CD8-positive, alpha-beta T cell (primary cell): ENCODE measurements at regions of chr15 and their contacts with region 1.

Region 1: GRCh38 chr15:98518823-98519561 is 129.3 kb upstream of the IGF1R start:
- DNase-seq: peak in 8 of 9 experiments; percentile 21 to 78 (median 45)
- ATAC-seq: peak; percentile 49
- H3K4me3 ChIP-seq: no peak overlapping the region
- H3K4me3 Mint-ChIP-seq: no peak overlapping the region
- H3K27ac ChIP-seq: no peak overlapping the region
- H3K27ac Mint-ChIP-seq: no peak overlapping the region
- H3K4me1 ChIP-seq: no peaks in the 10 kb centered on the region
- H3K4me1 Mint-ChIP-seq: no peaks in the 10 kb centered on the region
- H3K27me3 ChIP-seq: no peaks in the 10 kb centered on the region
- H3K27me3 Mint-ChIP-seq: peaks cover 3% of the 10 kb centered on the region
- CTCF ChIP-seq: peak; percentile 78

Region 2: DNA sequence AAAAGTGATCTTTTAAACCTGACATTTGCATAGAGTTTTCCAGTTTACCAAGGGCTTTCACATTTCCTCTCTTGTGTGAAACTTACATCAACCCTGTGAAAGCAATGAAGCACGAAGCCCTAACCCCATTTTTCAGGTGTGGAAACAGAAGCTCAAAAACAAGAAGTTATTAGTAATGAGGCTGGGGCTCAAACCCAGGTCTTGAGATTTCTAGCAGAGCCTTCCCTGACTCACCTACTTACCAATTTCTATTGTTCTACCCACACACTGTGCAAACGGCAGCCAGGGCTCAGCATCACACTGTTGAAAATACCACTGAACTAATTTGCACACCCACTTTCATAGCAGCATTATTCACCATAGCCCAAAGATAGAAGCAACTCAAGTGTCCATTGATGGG is 11.6 kb after region 1 on chr15:
- CTCF ChIA-PET with region 1: interaction called, 14 read pairs
- POLR2A ChIA-PET with region 1: no interaction called
- intact Hi-C with region 1: no loop called
- DNase-seq: no peak
- ATAC-seq: no peak
- H3K4me3 ChIP-seq: no peak overlapping the region
- H3K4me3 Mint-ChIP-seq: no peak overlapping the region
- H3K27ac ChIP-seq: no peak overlapping the region
- H3K27ac Mint-ChIP-seq: no peak overlapping the region
- H3K4me1 ChIP-seq: no peaks in the 10 kb centered on the region
- H3K4me1 Mint-ChIP-seq: no peaks in the 10 kb centered on the region
- H3K27me3 ChIP-seq: no peaks in the 10 kb centered on the region
- H3K27me3 Mint-ChIP-seq: peaks cover 6% of the 10 kb centered on the region
- CTCF ChIP-seq: no peak

Region 3: GRCh38 chr15:98599909-98600691 is 81.1 kb after region 1 on chr15:
- CTCF ChIA-PET with region 1: interaction called, 3 read pairs
- POLR2A ChIA-PET with region 1: no interaction called
- intact Hi-C with region 1: loop called in 1 of 2 experiments (anchors 5 kb)
- DNase-seq: peak in 8 of 9 experiments; percentile 4 to 66 (median 27)
- ATAC-seq: peak; percentile 79
- H3K4me3 ChIP-seq: peak overlapping the region; percentile 18 to 40
- H3K4me3 Mint-ChIP-seq: peak overlapping the region; percentile 93
- H3K27ac ChIP-seq: peak overlapping the region; percentile 6 to 17
- H3K27ac Mint-ChIP-seq: peak overlapping the region; percentile 93
- H3K4me1 ChIP-seq: peaks cover 10% of the 10 kb centered on the region
- H3K4me1 Mint-ChIP-seq: peaks cover 20% of the 10 kb centered on the region
- H3K27me3 ChIP-seq: no peaks in the 10 kb centered on the region
- H3K27me3 Mint-ChIP-seq: no peaks in the 10 kb centered on the region
- CTCF ChIP-seq: no peak

Region 4: DNA sequence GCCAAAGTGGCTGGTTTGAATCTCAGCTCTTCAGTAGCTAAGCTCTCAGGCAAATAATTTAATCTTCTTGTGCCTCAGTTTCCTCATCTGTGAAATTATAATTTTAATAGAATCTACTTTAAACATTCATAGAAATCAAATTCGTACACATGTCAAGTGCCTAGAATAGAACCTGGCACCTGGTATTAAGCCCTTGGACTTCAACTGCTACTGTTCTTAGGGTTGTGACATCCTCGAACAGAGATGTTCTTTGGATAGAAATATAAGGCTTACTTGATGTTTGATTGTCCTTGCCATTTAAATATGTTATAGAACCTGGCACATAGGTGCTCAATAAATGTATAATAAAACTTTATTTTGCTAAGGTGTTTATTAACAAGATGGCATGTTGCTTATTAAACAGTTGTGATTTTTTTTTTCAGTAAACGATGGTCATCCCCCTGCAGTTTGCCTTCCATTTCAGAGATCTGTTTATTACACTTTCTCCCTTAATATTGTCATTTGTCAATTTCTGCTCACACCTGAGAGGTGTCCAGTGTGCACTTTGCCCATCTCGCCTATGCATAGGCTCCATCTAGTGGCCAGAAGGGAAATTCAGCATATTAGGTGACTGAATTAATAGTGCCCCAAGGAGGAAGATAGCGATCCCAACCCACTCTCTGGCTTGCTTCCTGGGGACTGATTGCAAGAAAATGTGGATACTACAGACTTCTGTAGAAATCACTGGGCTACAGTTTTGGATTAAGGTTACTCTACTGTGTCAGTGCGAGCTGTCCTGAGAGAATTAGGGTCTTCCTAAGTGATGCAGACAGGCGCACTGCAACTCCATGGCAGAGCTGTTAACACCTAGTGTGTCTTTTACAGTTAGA is 140.1 kb after region 1 on chr15:
- CTCF ChIA-PET with region 1: interaction called, 119 read pairs
- POLR2A ChIA-PET with region 1: interaction called, 3 read pairs
- intact Hi-C with region 1: loop called (anchors 1 kb)
- DNase-seq: peak in 6 of 9 experiments; percentile 7 to 70 (median 36)
- ATAC-seq: peak; percentile 66
- H3K4me3 ChIP-seq: no peak overlapping the region
- H3K4me3 Mint-ChIP-seq: no peak overlapping the region
- H3K27ac ChIP-seq: no peak overlapping the region
- H3K27ac Mint-ChIP-seq: no peak overlapping the region
- H3K4me1 ChIP-seq: peaks cover 21% of the 10 kb centered on the region
- H3K4me1 Mint-ChIP-seq: peaks cover 52% of the 10 kb centered on the region
- H3K27me3 ChIP-seq: no peaks in the 10 kb centered on the region
- H3K27me3 Mint-ChIP-seq: peaks cover 1% of the 10 kb centered on the region
- CTCF ChIP-seq: peak; percentile 96

Region 5: GRCh38 chr15:98674336-98674735 is 155.3 kb after region 1 on chr15:
- CTCF ChIA-PET with region 1: no interaction called
- POLR2A ChIA-PET with region 1: no interaction called
- intact Hi-C with region 1: no loop called
- DNase-seq: no peak
- ATAC-seq: no peak
- H3K4me3 ChIP-seq: no peak overlapping the region
- H3K4me3 Mint-ChIP-seq: no peak overlapping the region
- H3K27ac ChIP-seq: no peak overlapping the region
- H3K27ac Mint-ChIP-seq: no peak overlapping the region
- H3K4me1 ChIP-seq: peaks cover 25% of the 10 kb centered on the region
- H3K4me1 Mint-ChIP-seq: peaks cover 60% of the 10 kb centered on the region
- H3K27me3 ChIP-seq: no peaks in the 10 kb centered on the region
- H3K27me3 Mint-ChIP-seq: no peaks in the 10 kb centered on the region
- CTCF ChIP-seq: no peak

Region 6: DNA sequence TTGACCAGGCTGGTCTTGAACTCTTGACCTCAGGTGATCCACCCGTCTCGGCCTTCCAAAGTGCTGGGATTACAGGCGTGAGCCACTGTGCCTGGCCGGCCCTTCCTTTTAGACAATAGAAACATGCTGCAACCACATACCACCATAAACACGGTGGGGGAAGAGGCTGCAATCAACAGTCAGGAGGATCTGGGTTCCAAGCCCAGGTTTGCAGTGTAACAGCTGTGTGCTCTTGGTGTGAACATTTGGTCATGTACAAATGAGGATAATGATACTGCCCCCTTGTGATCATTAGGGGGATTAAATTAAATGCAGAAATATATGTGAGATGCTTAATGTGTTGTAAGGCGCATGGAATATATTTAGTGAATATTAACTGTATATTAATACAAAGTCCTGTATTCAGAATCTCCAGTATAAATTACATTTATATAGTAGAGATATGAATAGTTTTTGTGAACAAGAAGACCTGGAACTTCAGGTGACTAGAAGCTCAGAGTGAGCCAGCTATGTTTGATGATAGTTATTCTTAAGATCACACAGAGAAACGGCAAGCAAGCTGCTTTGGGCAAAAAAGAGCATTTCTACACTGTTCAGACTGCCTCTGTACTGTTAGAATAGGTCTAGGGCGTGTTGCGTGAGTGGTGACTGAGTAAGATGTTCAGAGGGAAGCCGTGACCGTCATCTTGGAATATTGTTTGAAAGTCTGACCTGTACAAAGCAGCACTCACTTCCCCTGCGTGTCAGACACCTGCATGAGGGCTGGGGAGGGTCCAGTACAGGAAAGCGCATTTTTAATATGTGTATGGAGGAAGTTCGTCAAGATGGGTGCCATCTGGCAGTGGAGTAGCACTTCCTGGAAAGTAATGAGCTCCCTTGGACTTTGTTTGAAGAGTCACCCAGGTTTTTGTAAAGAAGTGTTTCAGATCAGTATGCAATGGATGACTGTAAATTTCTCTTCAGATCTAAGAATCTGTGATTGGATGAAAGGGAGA is 362.8 kb after region 1 on chr15:
- CTCF ChIA-PET with region 1: interaction called, 12 read pairs
- POLR2A ChIA-PET with region 1: interaction called, 3 read pairs
- intact Hi-C with region 1: loop called (anchors 1 to 2 kb)
- DNase-seq: peak in 2 of 9 experiments; percentile 47 to 64
- ATAC-seq: no peak
- H3K4me3 ChIP-seq: no peak overlapping the region
- H3K4me3 Mint-ChIP-seq: no peak overlapping the region
- H3K27ac ChIP-seq: no peak overlapping the region
- H3K27ac Mint-ChIP-seq: no peak overlapping the region
- H3K4me1 ChIP-seq: no peaks in the 10 kb centered on the region
- H3K4me1 Mint-ChIP-seq: peaks cover 17% of the 10 kb centered on the region
- H3K27me3 ChIP-seq: no peaks in the 10 kb centered on the region
- H3K27me3 Mint-ChIP-seq: no peaks in the 10 kb centered on the region
- CTCF ChIP-seq: peak; percentile 60

Region 7: DNA sequence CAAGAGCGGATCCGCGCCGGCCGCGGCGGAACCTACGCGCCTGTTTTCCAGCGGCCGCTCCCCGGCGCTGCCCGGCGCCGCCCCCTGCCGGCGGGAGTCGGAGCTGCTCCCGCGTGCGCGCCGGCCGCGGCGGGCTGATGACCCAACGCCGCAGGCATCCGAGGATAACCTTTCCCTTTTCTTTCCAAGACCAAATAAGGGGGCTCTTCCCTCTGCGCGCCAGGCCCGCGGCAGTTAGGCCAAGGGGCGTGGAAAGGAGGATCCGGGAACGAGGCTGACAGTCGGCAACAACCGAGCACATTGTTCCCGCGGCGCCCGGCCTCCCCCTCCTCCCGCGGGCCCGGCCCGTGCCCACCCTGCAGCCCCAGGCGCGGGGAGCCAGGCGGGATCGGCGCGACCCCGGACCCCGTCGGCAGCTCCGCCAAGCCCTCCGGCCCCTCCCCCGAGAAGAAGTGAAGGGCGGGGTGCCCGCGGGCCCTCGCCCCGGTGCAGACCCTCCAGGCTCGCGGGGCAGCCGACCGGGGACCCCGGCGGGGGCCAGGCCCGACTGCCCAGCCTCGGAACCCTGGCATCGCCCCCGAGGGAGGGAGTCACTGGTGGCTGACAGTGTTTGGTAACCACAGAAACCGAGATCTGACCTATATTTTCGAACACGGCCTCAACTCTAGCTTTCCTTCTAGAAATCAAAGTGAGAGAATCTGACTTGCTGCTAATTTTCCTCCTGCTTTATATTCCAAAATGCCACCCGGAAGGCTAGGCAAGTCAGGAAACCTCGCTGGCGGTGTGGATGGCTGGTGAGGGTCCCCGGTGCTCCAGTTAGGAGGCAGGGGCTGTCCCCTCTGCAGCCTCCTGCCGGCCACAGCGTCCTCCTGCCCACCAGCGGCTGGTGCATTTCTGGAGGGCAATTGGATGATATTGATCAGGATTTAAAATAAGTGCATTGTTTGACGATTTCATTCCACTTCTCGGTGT is 540.3 kb after region 1 on chr15:
- CTCF ChIA-PET with region 1: interaction called, 7 read pairs
- POLR2A ChIA-PET with region 1: no interaction called
- intact Hi-C with region 1: loop called (anchors 5 kb)
- DNase-seq: peak in 8 of 9 experiments; percentile 3 to 65 (median 34)
- ATAC-seq: peak; percentile 69
- H3K4me3 ChIP-seq: peak overlapping the region; percentile 36 to 49
- H3K4me3 Mint-ChIP-seq: peak overlapping the region; percentile 65
- H3K27ac ChIP-seq: no peak overlapping the region
- H3K27ac Mint-ChIP-seq: no peak overlapping the region
- H3K4me1 ChIP-seq: no peaks in the 10 kb centered on the region
- H3K4me1 Mint-ChIP-seq: peaks cover 12% of the 10 kb centered on the region
- H3K27me3 ChIP-seq: peaks cover 10 to 20% of the 10 kb centered on the region in 2 experiments
- H3K27me3 Mint-ChIP-seq: peaks cover 55% of the 10 kb centered on the region
- CTCF ChIP-seq: peak; percentile 61

Region 8: DNA sequence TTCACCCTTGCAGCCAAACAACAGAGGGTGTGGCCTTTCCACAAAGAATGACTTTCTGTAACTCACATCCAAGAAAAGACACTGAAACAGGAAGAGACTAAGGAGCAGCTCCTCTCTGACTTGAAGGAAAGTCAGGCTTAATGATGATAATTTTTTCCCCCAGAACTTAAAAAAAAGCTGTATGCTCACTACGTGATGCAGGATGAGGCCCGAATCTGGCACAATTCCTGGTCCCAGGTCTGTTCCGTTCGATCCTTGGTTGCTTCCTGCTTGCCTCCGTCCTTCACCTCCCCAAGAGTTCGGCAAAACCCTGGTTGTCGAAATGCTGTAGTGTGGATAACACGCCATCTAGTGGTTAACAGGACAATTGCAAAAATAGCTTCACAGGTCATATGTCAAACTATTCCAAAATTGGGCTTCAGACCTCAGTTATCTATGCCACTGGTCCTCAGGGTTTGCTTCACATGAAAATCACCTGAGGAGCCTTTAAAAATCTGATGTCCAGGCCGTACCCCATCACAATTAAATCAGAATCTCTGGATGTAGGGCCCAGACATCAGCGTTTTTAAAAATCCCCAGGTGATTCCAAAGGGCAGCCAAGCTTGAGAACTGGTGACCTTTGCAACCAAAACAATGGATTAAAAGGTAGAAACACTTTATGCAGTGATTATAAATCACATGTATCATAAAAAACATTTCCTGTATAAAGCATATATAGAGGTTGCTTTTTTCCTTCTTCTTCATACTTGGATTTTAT is 557.7 kb after region 1 on chr15:
- CTCF ChIA-PET with region 1: interaction called, 7 read pairs
- POLR2A ChIA-PET with region 1: no interaction called
- intact Hi-C with region 1: loop called in 1 of 2 experiments (anchors 2 kb)
- DNase-seq: peak in 8 of 9 experiments; percentile 20 to 79 (median 40)
- ATAC-seq: peak; percentile 71
- H3K4me3 ChIP-seq: peak overlapping the region; percentile 43 to 45
- H3K4me3 Mint-ChIP-seq: peak overlapping the region; percentile 81
- H3K27ac ChIP-seq: no peak overlapping the region
- H3K27ac Mint-ChIP-seq: no peak overlapping the region
- H3K4me1 ChIP-seq: peaks cover 3% of the 10 kb centered on the region
- H3K4me1 Mint-ChIP-seq: peaks cover 7% of the 10 kb centered on the region
- H3K27me3 ChIP-seq: no peaks in the 10 kb centered on the region
- H3K27me3 Mint-ChIP-seq: peaks cover 9% of the 10 kb centered on the region
- CTCF ChIP-seq: peak; percentile 83